PC-9 (cell line): ENCODE measurements at regions of chr17 and their contacts with region 1.

Region 1: GRCh38 chr17:63760771-63761539 is 12.4 kb downstream of the CCDC47 start:
- DNase-seq: no peak
- H3K4me3 ChIP-seq: no peak overlapping the region
- H3K27ac ChIP-seq: no peak overlapping the region
- H3K4me1 ChIP-seq: no peaks in the 10 kb centered on the region
- H3K27me3 ChIP-seq: no peaks in the 10 kb centered on the region
- CTCF ChIP-seq: no peak

Region 2: DNA sequence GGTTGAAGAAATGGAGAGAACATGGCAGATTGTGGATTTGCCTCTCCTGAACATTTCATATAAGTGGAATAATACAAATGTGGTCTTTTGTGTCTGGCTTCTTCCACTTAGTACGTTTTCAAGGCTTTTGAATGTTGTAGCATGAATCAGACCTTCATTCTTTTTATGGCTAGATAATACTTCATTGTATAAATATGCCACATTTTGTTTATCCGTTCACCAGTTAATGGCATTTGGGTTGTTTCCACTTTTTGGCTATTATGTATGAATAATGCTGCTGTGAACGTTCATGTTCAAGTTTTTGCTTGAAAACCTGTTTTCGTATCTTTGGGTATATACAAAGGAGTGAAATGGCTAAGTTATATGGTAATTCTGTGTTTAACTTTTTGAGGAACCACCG is 664.5 kb before region 1 on chr17:
- CTCF ChIA-PET with region 1: no interaction called
- POLR2A ChIA-PET with region 1: no interaction called
- intact Hi-C with region 1: no loop called
- DNase-seq: no peak
- H3K4me3 ChIP-seq: no peak overlapping the region
- H3K27ac ChIP-seq: no peak overlapping the region
- H3K4me1 ChIP-seq: no peaks in the 10 kb centered on the region
- H3K27me3 ChIP-seq: no peaks in the 10 kb centered on the region
- CTCF ChIP-seq: no peak

Region 3: GRCh38 chr17:63741221-63742049 is 19.5 kb before region 1 on chr17 and contains the start of gene STRADA:
- CTCF ChIA-PET with region 1: no interaction called
- POLR2A ChIA-PET with region 1: interaction called, 14 read pairs
- intact Hi-C with region 1: no loop called
- DNase-seq: peak; percentile 97 to 99
- H3K4me3 ChIP-seq: peak within 1 kb of the TSS; percentile 91
- H3K27ac ChIP-seq: peak within 1 kb of the TSS; percentile 72
- H3K4me1 ChIP-seq: peaks cover 15% of the 10 kb centered on the region
- H3K27me3 ChIP-seq: no peaks in the 10 kb centered on the region
- CTCF ChIP-seq: no peak
- total RNA-seq, gene STRADA: 28.8 and 30.6 TPM in 2 replicates